Activated CD8-positive, alpha-beta memory T cell treated with anti-CD3 and anti-CD28 coated beads, Interleukin-2, amount 10 ng/mL, durations not matched to agents 7 days and 5 days (primary cell): ENCODE measurements at regions of chr2 and their contacts with region 1.

Region 1: GRCh38 chr2:223760838-223761502 is 76.4 kb downstream of the AP1S3 start:
- DNase-seq: peak; percentile 94
- ATAC-seq: peak; percentile 94
- H3K4me3 Mint-ChIP-seq: peak overlapping the region; percentile 36
- H3K27ac Mint-ChIP-seq: peak overlapping the region; percentile 95
- H3K4me1 Mint-ChIP-seq: peaks cover 37% of the 10 kb centered on the region
- H3K27me3 Mint-ChIP-seq: no peaks in the 10 kb centered on the region

Region 2: GRCh38 chr2:223727562-223727961 is 33.4 kb before region 1 on chr2:
- CTCF ChIA-PET with region 1: interaction called, 28 read pairs
- DNase-seq: peak; percentile 66
- ATAC-seq: peak; percentile 73
- H3K4me3 Mint-ChIP-seq: no peak overlapping the region
- H3K27ac Mint-ChIP-seq: no peak overlapping the region
- H3K4me1 Mint-ChIP-seq: peaks cover 9% of the 10 kb centered on the region
- H3K27me3 Mint-ChIP-seq: no peaks in the 10 kb centered on the region

Region 3: GRCh38 chr2:223797811-223798721 is 37.1 kb after region 1 on chr2:
- CTCF ChIA-PET with region 1: interaction called, 13 read pairs
- DNase-seq: no peak
- ATAC-seq: no peak
- H3K4me3 Mint-ChIP-seq: no peak overlapping the region
- H3K27ac Mint-ChIP-seq: no peak overlapping the region
- H3K4me1 Mint-ChIP-seq: peaks cover 18% of the 10 kb centered on the region
- H3K27me3 Mint-ChIP-seq: no peaks in the 10 kb centered on the region

Region 4: GRCh38 chr2:223865907-223866508 is 105.0 kb after region 1 on chr2:
- CTCF ChIA-PET with region 1: interaction called, 12 read pairs
- DNase-seq: peak; percentile 51
- ATAC-seq: peak; percentile 82
- H3K4me3 Mint-ChIP-seq: peak overlapping the region; percentile 23
- H3K27ac Mint-ChIP-seq: peak overlapping the region; percentile 90
- H3K4me1 Mint-ChIP-seq: peaks cover 39% of the 10 kb centered on the region
- H3K27me3 Mint-ChIP-seq: no peaks in the 10 kb centered on the region

Region 5: GRCh38 chr2:223944703-223945531 is 183.9 kb after region 1 on chr2 and contains the start of gene WDFY1:
- CTCF ChIA-PET with region 1: interaction called, 12 read pairs
- DNase-seq: peak; percentile 90
- ATAC-seq: peak; percentile 82
- H3K4me3 Mint-ChIP-seq: peak within 1 kb of the TSS; percentile 94
- H3K27ac Mint-ChIP-seq: peak within 1 kb of the TSS; percentile 90
- H3K4me1 Mint-ChIP-seq: peaks cover 54% of the 10 kb centered on the region
- H3K27me3 Mint-ChIP-seq: no peaks in the 10 kb centered on the region
- total RNA-seq, gene WDFY1: 29.2 to 55.0 TPM

Region 6: DNA sequence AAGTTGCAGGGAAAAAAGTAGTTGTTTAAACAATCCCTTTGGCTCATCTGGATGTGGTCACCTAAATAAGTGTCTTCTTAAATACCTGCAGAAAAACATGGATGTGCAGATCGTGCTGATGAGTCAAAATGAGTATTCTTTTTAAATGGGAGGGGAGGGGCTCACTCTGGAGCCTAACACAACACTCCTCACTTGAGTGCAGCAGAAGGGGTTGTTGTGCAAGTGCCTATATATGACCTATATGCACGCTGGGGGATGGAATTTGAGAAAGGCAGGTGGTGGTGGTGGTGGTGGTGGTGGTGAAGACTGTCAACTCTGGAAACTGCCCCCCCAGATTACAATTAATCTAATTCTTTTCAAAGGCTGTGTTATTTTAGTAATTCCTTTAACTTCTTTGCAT is 718.9 kb after region 1 on chr2:
- CTCF ChIA-PET with region 1: no interaction called
- DNase-seq: peak; percentile 40
- ATAC-seq: peak; percentile 55
- H3K4me3 Mint-ChIP-seq: no peak overlapping the region
- H3K27ac Mint-ChIP-seq: peak overlapping the region; percentile 61
- H3K4me1 Mint-ChIP-seq: peaks cover 17% of the 10 kb centered on the region
- H3K27me3 Mint-ChIP-seq: no peaks in the 10 kb centered on the region